Common myeloid progenitor, CD34-positive (primary cell): ENCODE measurements at regions of chr11 and their contacts with region 1.

Region 1: DNA sequence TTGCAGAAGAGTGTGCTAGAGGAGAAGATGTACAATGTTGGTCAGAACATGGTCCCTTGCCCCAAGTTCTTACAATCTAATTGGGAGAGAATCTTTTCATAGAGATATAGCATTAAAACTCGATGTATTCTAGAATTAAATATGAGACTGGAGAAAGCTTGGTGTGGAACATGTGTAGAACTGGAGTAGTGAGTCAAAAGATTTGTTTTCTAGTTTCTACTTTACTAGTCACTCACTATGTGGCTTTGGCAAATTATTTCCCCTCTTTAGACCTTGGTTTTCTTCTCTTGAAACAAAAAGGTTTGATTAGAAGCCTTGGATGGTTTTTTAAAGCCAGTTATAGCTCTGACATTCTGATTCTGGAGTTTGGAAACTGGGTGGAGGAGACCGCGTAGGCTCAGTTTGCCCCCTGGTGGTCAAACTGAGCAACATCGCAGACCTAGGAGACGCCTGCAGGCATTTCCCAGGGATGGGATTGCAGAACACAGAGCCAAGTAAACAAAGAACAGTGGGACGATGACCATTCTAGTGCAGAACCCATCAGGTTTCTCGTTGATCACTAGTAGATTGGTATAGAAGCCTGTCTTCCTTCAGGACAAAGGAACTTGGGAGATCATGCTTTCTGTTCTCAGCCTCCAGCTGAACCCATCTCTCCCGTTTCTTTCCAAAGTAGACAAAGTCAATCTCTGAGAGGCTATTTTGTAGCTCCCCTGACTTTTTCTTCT is 8.5 kb upstream of the CHRDL2 start:
- DNase-seq: peak; percentile 54 to 73 (median 70)
- H3K4me3 ChIP-seq: no peak overlapping the region
- H3K27ac ChIP-seq: no peak overlapping the region
- H3K4me1 ChIP-seq: no peaks in the 10 kb centered on the region
- H3K27me3 ChIP-seq: peaks cover 0 to 8% (median 0%) of the 10 kb centered on the region in 5 experiments

Region 2: DNA sequence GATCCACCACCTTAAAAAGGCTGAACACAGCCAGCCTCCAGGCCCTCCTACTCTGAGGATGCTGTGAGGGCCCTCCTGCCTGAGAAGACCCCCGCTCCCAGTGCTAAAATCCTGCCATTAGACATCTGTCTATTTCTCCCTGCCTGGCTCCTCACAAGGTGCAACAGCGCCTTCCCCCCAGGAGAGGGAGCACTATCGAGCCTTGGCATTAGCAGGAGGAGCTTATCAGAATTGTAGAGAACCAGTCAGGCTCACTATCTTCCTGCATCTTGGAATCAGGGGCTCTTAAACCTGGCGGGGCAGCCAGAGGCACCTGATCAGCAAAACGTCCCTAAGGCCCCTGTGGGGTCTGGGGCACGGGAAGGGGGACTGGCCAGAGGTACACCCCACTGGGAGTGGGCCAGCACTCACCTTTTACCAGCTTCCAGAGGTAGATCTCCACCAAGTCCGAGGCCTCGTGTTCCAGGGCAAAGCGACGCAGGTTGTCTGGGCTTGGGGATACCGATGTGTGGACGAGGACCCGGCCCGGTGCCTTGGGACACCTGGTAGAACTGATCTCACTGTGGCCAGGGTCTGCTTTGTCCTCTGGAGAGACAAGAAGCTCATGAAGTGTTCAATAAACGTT is 37.2 kb before region 1 on chr11:
- CTCF ChIA-PET with region 1: interaction called, 10 read pairs
- POLR2A ChIA-PET with region 1: no interaction called
- DNase-seq: peak; percentile 56 to 73 (median 68)
- H3K4me3 ChIP-seq: no peak overlapping the region
- H3K27ac ChIP-seq: no peak overlapping the region
- H3K4me1 ChIP-seq: no peaks in the 10 kb centered on the region
- H3K27me3 ChIP-seq: no peaks in the 10 kb centered on the region

Region 3: DNA sequence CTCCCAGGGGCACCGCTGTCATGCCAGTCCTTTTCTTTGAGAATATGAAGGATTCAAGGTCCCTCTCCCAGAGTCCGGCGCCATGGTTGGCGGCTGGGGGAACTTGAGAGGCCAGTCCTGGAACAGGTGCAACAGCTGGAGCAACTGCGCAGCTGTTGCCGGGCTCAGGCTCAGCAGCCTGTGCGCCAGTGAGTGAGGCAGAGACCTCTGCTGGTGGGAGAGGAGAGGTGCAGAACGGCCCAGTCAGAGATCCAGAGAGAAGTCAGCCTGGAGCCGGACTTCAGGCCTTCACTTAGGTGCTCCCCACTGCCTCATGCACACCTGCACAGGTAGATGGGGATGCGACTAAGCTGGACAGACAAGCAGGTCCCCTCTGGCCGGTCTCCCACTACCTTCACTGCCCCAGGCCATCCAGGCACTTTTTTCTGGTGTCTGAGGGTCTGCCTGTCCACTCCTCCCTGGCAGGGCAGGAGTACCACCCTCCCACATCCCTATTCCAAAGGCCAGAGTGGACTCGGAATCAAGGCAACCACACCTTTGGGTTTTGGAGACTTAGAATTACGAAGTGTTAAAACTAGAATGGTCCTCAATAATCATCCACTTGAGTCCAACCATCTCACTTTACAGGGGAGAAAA is 13.0 kb before region 1 on chr11:
- CTCF ChIA-PET with region 1: interaction called, 47 read pairs
- POLR2A ChIA-PET with region 1: no interaction called
- DNase-seq: peak; percentile 46 to 74 (median 69)
- H3K4me3 ChIP-seq: no peak overlapping the region
- H3K27ac ChIP-seq: no peak overlapping the region
- H3K4me1 ChIP-seq: peaks cover 0 to 6% (median 4%) of the 10 kb centered on the region in 4 experiments
- H3K27me3 ChIP-seq: peaks cover 0 to 38% (median 31%) of the 10 kb centered on the region in 5 experiments